Heart right ventricle (tissue), 16 donors: ENCODE measurements at regions of chr3 and their contacts with region 1.

Region 1: DNA sequence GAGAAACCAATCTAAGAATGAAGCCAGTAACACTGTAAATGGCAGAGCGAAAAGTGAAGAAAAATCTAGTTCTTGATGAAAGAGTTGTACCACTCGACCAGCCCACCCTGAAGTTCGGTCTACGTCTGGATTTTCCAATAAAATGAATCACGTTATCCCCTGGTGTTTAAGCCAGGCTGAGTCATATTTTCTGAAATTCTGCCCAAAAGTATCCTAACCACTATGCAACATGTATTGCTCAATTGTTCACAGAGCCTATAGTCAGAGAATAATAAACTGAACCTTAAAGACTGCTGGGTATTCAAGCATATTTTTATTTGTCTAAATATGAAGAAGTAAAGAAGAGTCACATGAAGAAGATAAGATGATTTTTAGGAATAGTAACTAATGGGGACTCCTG is 245.7 kb downstream of the FGF12 start:
- DNase-seq: no peak
- ATAC-seq: no peak
- H3K4me3 ChIP-seq: no peak overlapping the region
- H3K27ac ChIP-seq: no peak overlapping the region
- H3K4me1 ChIP-seq: peaks cover 0 to 24% (median 10%) of the 10 kb centered on the region in 9 donors
- H3K27me3 ChIP-seq: no peaks in the 10 kb centered on the region
- CTCF ChIP-seq: no peak

Region 2: DNA sequence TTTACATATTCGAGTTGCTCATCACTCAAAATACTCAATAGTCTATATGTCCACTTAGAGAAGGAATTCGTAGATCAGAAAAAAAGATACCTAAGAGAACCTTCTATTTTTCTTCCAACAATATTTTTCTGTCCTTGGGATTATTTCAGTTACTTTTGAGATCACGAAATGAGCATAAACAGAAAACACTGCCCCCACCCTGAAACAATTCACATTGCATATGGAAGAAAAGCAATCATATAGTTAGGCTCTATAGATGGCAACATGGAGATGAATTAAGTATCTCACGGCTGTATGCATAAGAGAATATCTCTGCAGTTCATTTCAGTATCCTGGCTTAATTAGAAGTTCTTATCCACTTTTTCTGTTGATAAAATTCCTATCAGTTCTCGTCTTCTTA is 145.4 kb before region 1 on chr3:
- intact Hi-C with region 1: no loop called
- DNase-seq: no peak
- ATAC-seq: no peak
- H3K4me3 ChIP-seq: no peak overlapping the region
- H3K27ac ChIP-seq: no peak overlapping the region
- H3K4me1 ChIP-seq: peaks cover 0 to 13% (median 4%) of the 10 kb centered on the region in 9 donors
- H3K27me3 ChIP-seq: no peaks in the 10 kb centered on the region
- CTCF ChIP-seq: peak in 1 of 9 donors; percentile 6

Region 3: DNA sequence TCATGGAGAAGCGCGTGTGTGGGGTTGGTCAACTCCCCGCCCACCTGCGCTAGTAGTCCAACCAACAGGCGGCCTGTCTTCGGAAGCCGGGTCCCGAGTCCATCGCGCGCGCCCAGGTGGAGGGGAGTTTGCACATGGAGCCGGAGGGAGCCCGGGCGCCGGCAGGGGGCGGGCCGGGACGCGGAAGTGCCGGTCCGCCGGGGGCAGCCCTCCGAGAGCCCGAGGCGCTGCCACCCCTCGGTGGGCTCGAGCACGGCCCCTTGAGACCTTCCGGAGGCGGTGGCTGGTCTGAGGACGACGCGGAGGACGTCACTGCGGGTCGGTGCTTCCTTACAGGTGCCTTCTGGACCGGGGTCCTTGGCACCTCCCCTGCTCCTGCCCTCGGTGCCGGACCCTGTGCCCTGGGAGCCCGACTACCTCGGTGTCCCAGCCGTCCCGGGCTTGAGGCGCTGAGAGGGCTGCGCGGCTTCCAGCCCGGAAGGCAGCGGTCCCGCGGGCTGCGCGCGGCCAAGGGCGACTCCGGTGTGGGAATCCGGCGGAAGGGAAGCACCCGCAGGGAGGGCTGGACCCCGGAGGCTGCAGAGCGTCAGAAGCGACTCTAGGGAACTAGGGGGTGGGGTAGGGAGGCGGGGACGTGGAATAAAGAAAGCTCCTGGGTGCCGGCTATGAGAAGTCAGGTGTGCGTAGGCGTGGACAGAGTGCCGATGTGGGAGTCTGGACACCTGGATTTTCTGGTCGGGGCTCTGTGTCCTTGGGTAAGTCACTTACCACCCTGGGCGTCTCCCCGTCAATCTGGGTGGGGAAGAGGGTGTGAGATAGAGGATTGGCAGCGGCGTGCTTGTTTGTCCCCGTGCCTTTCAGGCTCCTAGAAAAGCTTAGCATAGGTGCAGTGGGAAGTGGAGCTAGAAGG is 33.4 kb after region 1 on chr3:
- intact Hi-C with region 1: loop called in 1 of 10 experiments (anchors 5 kb)
- DNase-seq: peak; percentile 14 to 31
- ATAC-seq: peak; percentile 31 to 71 (median 55)
- H3K4me3 ChIP-seq: peak overlapping the region; percentile 36 to 64 (median 54)
- H3K27ac ChIP-seq: peak overlapping the region in 9 of 10 donors; percentile 14 to 84 (median 72)
- H3K4me1 ChIP-seq: peaks cover 0 to 57% (median 33%) of the 10 kb centered on the region in 9 donors
- H3K27me3 ChIP-seq: peaks cover 0 to 38% (median 8%) of the 10 kb centered on the region in 7 donors
- CTCF ChIP-seq: peak in 7 of 9 donors; percentile 11 to 54 (median 39)

Region 4: DNA sequence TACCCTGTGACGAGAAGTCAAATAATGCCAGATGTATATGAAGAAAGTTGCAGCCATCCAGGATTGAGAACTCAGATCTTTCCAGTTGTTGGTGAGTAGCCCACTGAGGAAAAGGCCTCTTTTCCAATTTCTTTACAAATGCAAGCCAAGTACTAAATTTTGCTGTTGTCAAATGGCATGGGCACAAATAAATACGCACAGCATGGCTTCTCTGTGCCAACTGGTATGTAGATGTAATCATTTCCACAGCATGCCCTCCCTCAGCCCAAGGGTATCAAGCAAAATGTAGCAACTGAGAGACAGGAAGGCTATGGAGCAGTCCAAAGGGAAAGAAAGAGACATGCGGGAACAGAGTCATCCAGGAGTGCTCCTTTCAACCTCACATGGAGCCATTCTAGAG is 140.3 kb after region 1 on chr3:
- intact Hi-C with region 1: no loop called
- DNase-seq: no peak
- ATAC-seq: no peak
- H3K4me3 ChIP-seq: no peak overlapping the region
- H3K27ac ChIP-seq: no peak overlapping the region
- H3K4me1 ChIP-seq: peaks cover 0 to 2% (median 0%) of the 10 kb centered on the region in 9 donors
- H3K27me3 ChIP-seq: no peaks in the 10 kb centered on the region
- CTCF ChIP-seq: no peak